ENCODE measurements at regions of chr14 and their contacts with region 1.

Region 1: GRCh38 chr14:49852301-49853157 is at the start of gene NEMF:
- DNase-seq: peak; percentile 90
- H3K4me3 Mint-ChIP-seq: peak within 1 kb of the TSS; percentile 98
- H3K27ac Mint-ChIP-seq: peak within 1 kb of the TSS; percentile 97
- H3K4me1 Mint-ChIP-seq: peaks cover 37% of the 10 kb centered on the region
- H3K27me3 Mint-ChIP-seq: no peaks in the 10 kb centered on the region
- total RNA-seq, gene NEMF: 45.5 to 47.0 TPM

Region 2: GRCh38 chr14:49585803-49586672 is 266.5 kb before region 1 on chr14 and contains the start of gene RPS29:
- CTCF ChIA-PET with region 1: interaction called, 4 read pairs
- intact Hi-C with region 1: loop called (anchors 1 kb)
- DNase-seq: peak; percentile 99
- H3K4me3 Mint-ChIP-seq: peak within 1 kb of the TSS; percentile 87
- H3K27ac Mint-ChIP-seq: peak within 1 kb of the TSS; percentile 98
- H3K4me1 Mint-ChIP-seq: peaks cover 40% of the 10 kb centered on the region
- H3K27me3 Mint-ChIP-seq: peaks cover 3% of the 10 kb centered on the region
- total RNA-seq, gene RPS29: 1,858 to 2,382 TPM

Region 3: DNA sequence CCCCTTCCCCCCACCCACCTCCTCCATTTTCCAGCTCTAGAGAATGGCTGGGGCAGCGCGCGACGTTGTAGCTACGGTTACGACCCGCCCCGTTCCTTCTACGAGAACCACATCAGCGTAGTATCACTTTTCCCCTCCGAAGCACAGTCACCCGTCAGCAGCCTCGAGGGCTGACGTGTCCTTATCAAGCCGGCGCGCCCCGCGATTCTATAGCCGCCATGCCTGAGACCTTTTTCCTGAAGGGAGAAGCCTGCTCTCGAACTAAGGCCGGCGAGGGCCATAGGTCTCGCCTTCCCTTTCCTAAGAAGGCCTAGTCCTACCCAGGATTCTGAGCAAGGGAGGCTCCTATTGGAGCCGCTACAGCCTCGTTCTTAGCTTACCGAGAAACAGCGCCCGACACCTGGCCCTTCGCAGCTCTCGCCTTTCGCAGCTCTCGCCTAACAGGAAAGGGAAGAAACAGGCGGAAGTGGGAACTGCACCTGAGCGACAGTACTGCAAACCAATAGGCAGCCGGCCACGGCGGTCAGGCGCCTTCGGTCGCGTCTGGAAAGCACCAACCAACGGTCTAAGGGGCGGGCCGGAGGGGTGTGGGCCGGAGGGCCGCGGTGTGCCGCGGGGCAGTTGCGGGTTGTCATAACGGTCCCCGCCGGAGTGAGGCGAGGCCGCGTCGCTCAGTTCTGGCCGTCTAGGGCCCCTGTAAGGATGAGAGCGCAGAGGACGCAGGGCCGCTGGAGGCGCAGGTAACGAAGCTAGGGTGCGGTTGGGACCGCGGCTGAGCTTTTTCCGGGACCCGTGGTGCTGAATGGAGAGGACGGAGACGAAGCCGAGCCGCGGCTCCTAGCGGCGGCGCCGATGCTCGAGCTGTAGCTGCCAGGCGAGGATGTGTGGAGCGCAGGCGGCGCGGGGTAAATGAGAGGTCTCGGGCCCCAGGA is 232.1 kb before region 1 on chr14 and contains the starts of genes MGAT2 and RPL36AL:
- CTCF ChIA-PET with region 1: interaction called, 4 read pairs
- intact Hi-C with region 1: loop called (anchors 1 kb)
- DNase-seq: peak; percentile 97
- H3K4me3 Mint-ChIP-seq: peak within 1 kb of the TSS; percentile 97
- H3K27ac Mint-ChIP-seq: peak within 1 kb of the TSS; percentile 97
- H3K4me1 Mint-ChIP-seq: peaks cover 52% of the 10 kb centered on the region
- H3K27me3 Mint-ChIP-seq: no peaks in the 10 kb centered on the region
- total RNA-seq, gene MGAT2: 20.6 to 20.7 TPM
- total RNA-seq, gene RPL36AL: 250 to 266 TPM

Region 4: DNA sequence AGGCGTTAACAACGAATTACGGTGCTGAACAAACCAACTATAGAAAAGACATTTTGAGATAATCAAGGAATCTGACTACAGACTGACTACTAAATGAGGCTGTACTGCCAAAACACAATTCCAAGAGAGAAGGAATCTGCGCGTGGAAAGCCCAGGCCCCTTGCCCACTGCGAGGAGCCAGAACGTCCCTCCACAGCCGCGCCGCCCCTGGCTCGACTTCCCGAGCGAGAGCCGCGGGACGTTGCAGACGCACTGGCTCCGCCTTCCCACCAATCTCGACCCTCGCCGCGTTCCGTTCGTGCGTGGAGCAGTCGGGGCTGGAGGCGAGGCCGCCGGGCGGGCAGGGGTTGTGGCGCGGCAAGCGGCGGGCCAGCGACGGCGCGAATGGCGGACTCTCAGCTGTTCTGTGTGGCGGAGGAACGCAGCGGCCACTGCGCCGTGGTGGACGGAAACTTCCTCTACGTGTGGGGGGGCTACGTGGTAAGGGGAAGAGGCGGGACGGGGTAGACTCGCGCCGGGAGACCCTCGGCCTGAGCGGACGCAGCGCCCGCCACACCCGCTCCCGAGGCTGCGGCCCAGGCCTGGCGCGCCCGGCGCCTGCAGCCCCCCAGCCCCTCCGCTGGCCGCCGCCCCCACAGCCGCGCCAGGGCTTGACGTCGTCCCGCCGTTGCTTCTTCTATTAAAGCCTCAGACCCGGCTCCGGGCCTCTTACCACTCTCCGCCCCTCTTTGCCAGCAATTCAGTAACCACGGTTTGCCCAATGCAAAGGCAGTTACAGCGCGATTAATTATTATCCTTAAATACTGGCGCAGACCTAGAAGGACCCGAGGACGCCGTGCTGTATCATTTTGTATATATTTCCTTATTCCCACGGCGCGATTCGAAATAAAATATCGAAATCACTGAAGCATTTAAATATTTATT is 159.5 kb before region 1 on chr14 and contains the start of gene KLHDC1:
- CTCF ChIA-PET with region 1: no interaction called
- intact Hi-C with region 1: loop called (anchors 2 kb)
- DNase-seq: peak; percentile 84
- H3K4me3 Mint-ChIP-seq: peak within 1 kb of the TSS; percentile 81
- H3K27ac Mint-ChIP-seq: peak within 1 kb of the TSS; percentile 62
- H3K4me1 Mint-ChIP-seq: peaks cover 34% of the 10 kb centered on the region
- H3K27me3 Mint-ChIP-seq: no peaks in the 10 kb centered on the region
- total RNA-seq, gene KLHDC1: 0.57 to 0.79 TPM

Region 5: DNA sequence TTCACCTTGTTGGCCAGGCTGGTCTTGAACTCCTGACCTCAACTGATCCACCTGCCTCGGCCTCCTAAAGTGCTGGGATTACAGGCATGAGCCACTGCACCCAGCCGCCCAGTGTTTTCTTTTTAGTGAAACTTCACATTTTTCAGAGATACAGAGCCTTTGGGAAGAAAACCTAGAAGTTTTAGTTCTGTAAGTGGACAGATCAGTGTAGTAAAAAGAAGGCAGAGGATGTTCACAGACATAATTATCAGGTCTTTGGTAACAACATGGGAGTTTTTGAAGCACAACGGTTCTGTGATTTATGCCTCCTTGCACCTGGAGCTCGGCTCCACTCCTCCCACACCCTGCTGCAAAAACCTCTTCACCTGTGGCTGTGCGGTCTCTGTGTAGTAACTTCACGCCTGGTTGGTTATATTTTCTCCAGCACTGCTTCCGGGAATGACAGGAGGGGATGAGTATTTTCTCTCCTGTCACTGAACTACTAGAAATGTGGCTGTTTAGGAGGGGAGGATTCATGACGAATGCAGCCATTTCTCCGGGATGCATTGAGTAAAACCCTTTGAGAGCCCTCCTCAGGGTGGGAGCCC is 107.4 kb after region 1 on chr14:
- CTCF ChIA-PET with region 1: no interaction called
- intact Hi-C with region 1: no loop called
- DNase-seq: peak; percentile 63
- H3K4me3 Mint-ChIP-seq: no peak overlapping the region
- H3K27ac Mint-ChIP-seq: peak overlapping the region; percentile 50
- H3K4me1 Mint-ChIP-seq: peaks cover 36% of the 10 kb centered on the region
- H3K27me3 Mint-ChIP-seq: no peaks in the 10 kb centered on the region

Region 6: GRCh38 chr14:50099335-50099734 is 246.8 kb after region 1 on chr14:
- CTCF ChIA-PET with region 1: interaction called, 18 read pairs
- intact Hi-C with region 1: no loop called
- DNase-seq: no peak
- H3K4me3 Mint-ChIP-seq: no peak overlapping the region
- H3K27ac Mint-ChIP-seq: no peak overlapping the region
- H3K4me1 Mint-ChIP-seq: peaks cover 57% of the 10 kb centered on the region
- H3K27me3 Mint-ChIP-seq: no peaks in the 10 kb centered on the region

Region 7: GRCh38 chr14:50109342-50109741 is 256.8 kb after region 1 on chr14:
- CTCF ChIA-PET with region 1: interaction called, 13 read pairs
- intact Hi-C with region 1: loop called (anchors 1 kb)
- DNase-seq: no peak
- H3K4me3 Mint-ChIP-seq: no peak overlapping the region
- H3K27ac Mint-ChIP-seq: peak overlapping the region; percentile 59
- H3K4me1 Mint-ChIP-seq: peaks cover 43% of the 10 kb centered on the region
- H3K27me3 Mint-ChIP-seq: no peaks in the 10 kb centered on the region

Region 8: GRCh38 chr14:50532502-50533240 is 680.1 kb after region 1 on chr14 and contains the start of gene MAP4K5:
- CTCF ChIA-PET with region 1: no interaction called
- intact Hi-C with region 1: loop called (anchors 2 kb)
- DNase-seq: peak; percentile 89
- H3K4me3 Mint-ChIP-seq: peak within 1 kb of the TSS; percentile 85
- H3K27ac Mint-ChIP-seq: peak within 1 kb of the TSS; percentile 72
- H3K4me1 Mint-ChIP-seq: peaks cover 45% of the 10 kb centered on the region
- H3K27me3 Mint-ChIP-seq: no peaks in the 10 kb centered on the region
- total RNA-seq, gene MAP4K5: 10.2 to 11.2 TPM

Measured in activated naive CD4-positive, alpha-beta T cell treated with anti-CD3 and anti-CD28 coated beads for 36 hours (primary cell).